Activated naive CD4-positive, alpha-beta T cell treated with anti-CD3 and anti-CD28 coated beads for 36 hours (primary cell): ENCODE measurements at regions of chr9 and their contacts with region 1.

Region 1: DNA sequence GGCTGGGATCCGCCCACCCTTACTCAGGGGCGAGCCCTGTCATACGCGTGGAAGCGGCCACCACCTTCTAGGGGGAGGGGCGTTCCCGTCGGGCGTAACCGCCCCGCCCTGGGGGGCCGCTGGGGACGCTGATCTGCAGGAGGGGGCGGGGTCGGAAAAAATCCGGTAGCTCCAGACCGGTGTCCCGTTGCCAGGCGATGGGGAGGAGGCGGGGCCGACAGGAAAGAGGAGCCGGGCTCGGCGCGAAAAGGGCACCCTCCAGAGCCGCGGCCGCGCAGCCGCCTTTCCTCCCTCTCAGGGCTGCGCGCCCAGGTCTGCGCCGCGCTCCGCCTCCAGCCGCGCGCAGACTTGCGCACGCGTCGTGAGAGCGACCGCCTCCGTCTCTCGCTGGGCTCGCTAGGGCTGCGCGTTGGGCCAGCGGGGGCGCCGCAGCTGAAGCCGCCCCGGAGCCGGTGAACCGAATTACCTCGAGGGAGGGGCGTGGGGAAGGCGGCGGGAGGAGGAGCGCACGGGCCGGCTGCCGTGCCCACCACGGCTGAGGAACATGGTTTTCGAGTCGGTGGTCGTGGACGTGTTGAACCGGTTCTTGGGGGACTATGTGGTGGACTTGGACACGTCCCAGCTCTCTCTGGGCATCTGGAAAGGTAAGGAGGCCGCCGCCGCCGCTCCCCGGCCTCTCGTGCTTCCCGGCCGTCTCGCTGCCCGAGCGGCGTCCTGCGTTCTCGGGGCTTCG is at the start of gene VPS13A:
- DNase-seq: peak; percentile 96
- H3K4me3 Mint-ChIP-seq: peak within 1 kb of the TSS; percentile 80
- H3K27ac Mint-ChIP-seq: peak within 1 kb of the TSS; percentile 79
- H3K4me1 Mint-ChIP-seq: peaks cover 23% of the 10 kb centered on the region
- H3K27me3 Mint-ChIP-seq: no peaks in the 10 kb centered on the region
- total RNA-seq, gene VPS13A: 26.8 to 26.9 TPM

Region 2: GRCh38 chr9:76458903-76459690 is 718.2 kb before region 1 on chr9 and contains the start of gene GCNT1:
- CTCF ChIA-PET with region 1: no interaction called
- intact Hi-C with region 1: loop called (anchors 2 kb)
- DNase-seq: peak; percentile 89
- H3K4me3 Mint-ChIP-seq: peak within 1 kb of the TSS; percentile 90
- H3K27ac Mint-ChIP-seq: no peak within 1 kb of the TSS
- H3K4me1 Mint-ChIP-seq: peaks cover 12% of the 10 kb centered on the region
- H3K27me3 Mint-ChIP-seq: peaks cover 8% of the 10 kb centered on the region
- total RNA-seq, gene GCNT1: 0.48 to 0.54 TPM

Region 3: GRCh38 chr9:77163884-77164283 is 13.4 kb before region 1 on chr9:
- CTCF ChIA-PET with region 1: interaction called, 12 read pairs
- intact Hi-C with region 1: no loop called
- DNase-seq: no peak
- H3K4me3 Mint-ChIP-seq: no peak overlapping the region
- H3K27ac Mint-ChIP-seq: no peak overlapping the region
- H3K4me1 Mint-ChIP-seq: peaks cover 2% of the 10 kb centered on the region
- H3K27me3 Mint-ChIP-seq: peaks cover 5% of the 10 kb centered on the region

Region 4: DNA sequence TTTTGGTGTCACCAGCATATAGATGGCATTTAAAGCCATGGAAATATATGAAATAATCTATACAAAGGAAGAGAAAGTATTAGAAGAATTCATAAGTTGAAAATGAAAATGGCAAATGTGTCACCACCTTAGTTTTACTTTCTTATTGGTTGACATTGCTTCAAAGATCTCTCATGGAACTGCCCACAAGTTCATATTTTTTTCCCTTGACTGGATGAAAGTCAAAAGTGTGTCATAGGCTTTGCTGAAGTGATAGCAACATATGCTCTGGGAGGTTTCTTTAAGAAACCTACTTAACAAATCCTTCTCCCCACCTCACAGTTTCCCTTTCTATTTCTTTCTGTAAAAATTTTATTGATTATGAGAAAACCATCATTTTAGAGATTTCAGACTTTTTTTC is 127.2 kb after region 1 on chr9:
- CTCF ChIA-PET with region 1: no interaction called
- intact Hi-C with region 1: loop called (anchors 1 kb)
- DNase-seq: no peak
- H3K4me3 Mint-ChIP-seq: no peak overlapping the region
- H3K27ac Mint-ChIP-seq: peak overlapping the region; percentile 53
- H3K4me1 Mint-ChIP-seq: peaks cover 13% of the 10 kb centered on the region
- H3K27me3 Mint-ChIP-seq: no peaks in the 10 kb centered on the region

Region 5: DNA sequence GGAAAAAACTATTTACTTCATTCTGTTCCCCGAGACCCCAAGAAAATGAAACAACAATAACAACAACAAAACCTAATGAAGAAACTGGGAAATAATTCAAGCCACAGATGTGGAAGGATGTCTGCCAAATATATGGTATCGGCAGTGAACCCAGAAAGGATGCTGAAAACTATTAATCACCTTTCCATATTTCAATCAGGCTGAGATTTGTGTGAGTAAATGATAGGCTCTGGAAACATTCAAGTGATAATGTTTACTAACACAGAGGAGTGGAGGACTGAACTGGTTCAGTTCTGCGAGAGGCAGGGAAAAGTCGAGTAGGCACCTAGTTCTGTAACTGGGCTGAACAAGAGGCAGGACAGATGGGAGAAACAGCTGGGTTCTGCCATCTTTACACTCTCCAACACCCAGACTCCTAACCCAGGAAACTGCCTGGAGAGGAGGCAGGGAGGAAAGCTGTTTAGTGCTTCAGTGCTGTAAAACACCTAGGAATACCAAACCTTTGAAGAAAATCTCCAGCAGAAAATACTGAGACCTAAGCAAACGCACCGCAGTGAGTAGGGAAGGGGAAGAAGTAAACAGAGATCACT is 567.6 kb after region 1 on chr9:
- CTCF ChIA-PET with region 1: no interaction called
- intact Hi-C with region 1: loop called (anchors 5 kb)
- DNase-seq: no peak
- H3K4me3 Mint-ChIP-seq: no peak overlapping the region
- H3K27ac Mint-ChIP-seq: no peak overlapping the region
- H3K4me1 Mint-ChIP-seq: peaks cover 45% of the 10 kb centered on the region
- H3K27me3 Mint-ChIP-seq: no peaks in the 10 kb centered on the region

Region 6: GRCh38 chr9:78235756-78236538 is 1058.6 kb after region 1 on chr9 and contains the start of gene CEP78:
- CTCF ChIA-PET with region 1: no interaction called
- intact Hi-C with region 1: loop called (anchors 5 kb)
- DNase-seq: peak; percentile 91
- H3K4me3 Mint-ChIP-seq: peak within 1 kb of the TSS; percentile 96
- H3K27ac Mint-ChIP-seq: peak within 1 kb of the TSS; percentile 91
- H3K4me1 Mint-ChIP-seq: peaks cover 34% of the 10 kb centered on the region
- H3K27me3 Mint-ChIP-seq: no peaks in the 10 kb centered on the region
- total RNA-seq, gene CEP78: 39.5 to 39.7 TPM

Region 7: GRCh38 chr9:78296893-78297671 is 1119.8 kb after region 1 on chr9 and contains the start of gene PSAT1:
- CTCF ChIA-PET with region 1: no interaction called
- intact Hi-C with region 1: loop called (anchors 1 kb)
- DNase-seq: peak; percentile 95
- H3K4me3 Mint-ChIP-seq: peak within 1 kb of the TSS; percentile 81
- H3K27ac Mint-ChIP-seq: peak within 1 kb of the TSS; percentile 94
- H3K4me1 Mint-ChIP-seq: peaks cover 40% of the 10 kb centered on the region
- H3K27me3 Mint-ChIP-seq: no peaks in the 10 kb centered on the region
- total RNA-seq, gene PSAT1: 235 to 240 TPM